AG04450 (cell line): ENCODE measurements at regions of chr6 and their contacts with region 1.

Region 1: GRCh38 chr6:133891149-133891926 is 2.4 kb downstream of the TCF21 start:
- DNase-seq: no peak
- H3K4me3 ChIP-seq: peak overlapping the region; percentile 98
- H3K27ac ChIP-seq: peak overlapping the region; percentile 75
- H3K27me3 ChIP-seq: no peaks in the 10 kb centered on the region
- CTCF ChIP-seq: 0 out of 2 replicates have a peak, but pooled peaks have one; percentile 9

Region 2: DNA sequence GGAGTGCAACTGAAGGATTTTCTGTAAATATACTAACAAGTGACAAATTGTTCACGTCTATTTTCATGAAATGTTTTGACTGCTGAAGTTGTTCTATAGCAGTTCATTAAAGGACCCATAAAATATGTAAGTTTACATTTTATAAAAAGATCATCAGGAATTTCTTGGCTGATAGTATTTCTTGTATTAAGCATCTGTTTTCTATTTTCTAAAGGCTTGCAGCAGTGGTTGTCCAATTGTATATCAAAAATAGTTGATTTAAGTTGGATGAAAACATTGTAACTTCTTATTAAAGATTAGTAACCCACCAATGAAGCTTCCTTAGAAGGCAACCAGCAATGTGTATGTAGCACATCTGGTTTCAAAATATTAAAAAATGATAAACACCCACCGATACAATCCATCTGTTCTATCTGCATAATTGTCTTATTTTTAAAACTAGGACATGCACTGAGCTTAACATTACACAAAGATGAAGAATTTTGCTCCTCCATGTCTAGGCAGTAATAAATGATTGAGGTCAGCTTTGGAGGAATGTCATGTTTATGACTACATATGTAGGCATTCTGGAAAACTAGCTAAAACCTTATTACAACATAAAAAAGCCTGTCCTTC is 303.7 kb before region 1 on chr6:
- CTCF ChIA-PET with region 1: no interaction called
- POLR2A ChIA-PET with region 1: interaction called, 13 read pairs
- DNase-seq: peak; percentile 70
- H3K4me3 ChIP-seq: no peak overlapping the region
- H3K27ac ChIP-seq: no peak overlapping the region
- H3K27me3 ChIP-seq: no peaks in the 10 kb centered on the region
- CTCF ChIP-seq: no peak

Region 3: GRCh38 chr6:133609404-133610270 is 281.7 kb before region 1 on chr6:
- CTCF ChIA-PET with region 1: no interaction called
- POLR2A ChIA-PET with region 1: interaction called, 23 read pairs
- DNase-seq: peak; percentile 100
- H3K4me3 ChIP-seq: no peak overlapping the region
- H3K27ac ChIP-seq: peak overlapping the region; percentile 92
- H3K27me3 ChIP-seq: no peaks in the 10 kb centered on the region
- CTCF ChIP-seq: no peak

Region 4: GRCh38 chr6:133623065-133623464 is 268.3 kb before region 1 on chr6:
- CTCF ChIA-PET with region 1: no interaction called
- POLR2A ChIA-PET with region 1: interaction called, 15 read pairs
- DNase-seq: no peak
- H3K4me3 ChIP-seq: no peak overlapping the region
- H3K27ac ChIP-seq: no peak overlapping the region
- H3K27me3 ChIP-seq: no peaks in the 10 kb centered on the region
- CTCF ChIP-seq: no peak

Region 5: GRCh38 chr6:133748628-133749027 is 142.7 kb before region 1 on chr6:
- CTCF ChIA-PET with region 1: no interaction called
- POLR2A ChIA-PET with region 1: interaction called, 12 read pairs
- DNase-seq: no peak
- H3K4me3 ChIP-seq: no peak overlapping the region
- H3K27ac ChIP-seq: no peak overlapping the region
- H3K27me3 ChIP-seq: no peaks in the 10 kb centered on the region
- CTCF ChIP-seq: no peak

Region 6: DNA sequence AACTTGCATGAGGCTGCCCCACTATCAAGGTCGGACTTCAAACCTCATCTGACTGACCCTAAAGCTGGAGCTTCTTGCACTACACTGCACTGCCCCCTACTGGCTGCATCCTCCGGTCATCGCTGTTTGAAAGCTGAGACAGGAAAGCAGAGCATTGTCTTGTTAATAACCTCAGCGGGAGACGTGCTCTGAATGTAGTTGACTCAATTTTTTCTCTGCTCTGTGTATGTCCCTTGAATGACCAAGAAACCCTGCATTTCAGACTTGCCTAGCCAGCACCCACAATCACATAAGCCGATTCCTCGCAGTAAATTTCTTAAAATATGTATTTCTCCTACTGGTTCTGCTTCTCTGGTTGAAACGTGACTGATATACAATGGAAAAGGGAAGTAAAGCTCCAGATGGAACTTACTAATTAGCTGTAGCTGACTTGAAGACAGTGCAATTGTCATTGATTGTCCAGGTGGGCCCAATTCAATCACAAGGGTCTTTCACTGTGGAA is 25.4 kb after region 1 on chr6:
- CTCF ChIA-PET with region 1: interaction called, 11 read pairs
- POLR2A ChIA-PET with region 1: interaction called, 11 read pairs
- DNase-seq: peak; percentile 89
- H3K4me3 ChIP-seq: no peak overlapping the region
- H3K27ac ChIP-seq: no peak overlapping the region
- H3K27me3 ChIP-seq: no peaks in the 10 kb centered on the region
- CTCF ChIP-seq: peak; percentile 97

Region 7: DNA sequence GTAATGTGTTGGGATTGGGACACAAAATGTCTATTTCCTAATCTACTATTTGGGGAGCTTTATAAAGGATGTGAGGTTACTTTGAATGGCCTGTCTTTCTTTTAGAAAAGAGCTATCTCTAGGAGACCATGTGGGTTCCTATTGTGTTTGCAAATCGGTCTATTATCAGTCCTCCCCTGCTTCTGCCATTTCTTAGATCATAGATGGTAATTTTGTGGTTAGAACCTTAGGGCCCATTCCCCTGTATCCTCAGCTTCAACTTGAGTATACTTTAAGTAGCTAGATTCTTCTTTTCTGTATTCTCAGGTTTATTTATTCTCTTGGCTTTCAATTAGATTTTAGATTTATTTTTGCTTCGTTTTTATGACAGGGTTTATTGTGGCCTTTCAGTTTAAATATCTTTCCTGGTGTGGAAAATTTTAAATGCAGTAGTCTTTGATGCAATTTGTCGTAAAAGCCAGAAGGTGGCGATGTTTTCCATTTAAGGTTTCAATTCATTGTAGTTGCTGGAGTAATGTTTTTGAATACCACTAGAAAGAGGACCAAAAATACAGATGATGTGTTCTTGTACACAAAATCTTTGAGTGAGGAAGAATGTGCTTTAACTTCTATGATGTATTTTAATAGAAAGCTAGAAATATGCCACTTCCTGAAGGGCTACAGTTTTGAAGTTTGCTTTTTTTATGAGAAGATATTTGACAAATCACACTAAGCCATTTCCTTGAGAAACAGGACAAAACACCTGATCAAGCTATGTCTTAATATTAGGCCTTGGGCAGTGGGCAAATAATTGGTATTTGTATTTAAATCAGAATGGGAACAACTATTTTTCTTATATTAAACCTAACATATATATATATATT is 82.0 kb after region 1 on chr6:
- CTCF ChIA-PET with region 1: no interaction called
- POLR2A ChIA-PET with region 1: no interaction called
- DNase-seq: peak; percentile 42
- H3K4me3 ChIP-seq: no peak overlapping the region
- H3K27ac ChIP-seq: no peak overlapping the region
- H3K27me3 ChIP-seq: no peaks in the 10 kb centered on the region
- CTCF ChIP-seq: peak; percentile 73

Region 8: GRCh38 chr6:134609716-134610261 is 718.5 kb after region 1 on chr6:
- CTCF ChIA-PET with region 1: no interaction called
- POLR2A ChIA-PET with region 1: no interaction called
- DNase-seq: no peak
- H3K4me3 ChIP-seq: no peak overlapping the region
- H3K27ac ChIP-seq: no peak overlapping the region
- H3K27me3 ChIP-seq: no peaks in the 10 kb centered on the region
- CTCF ChIP-seq: no peak